Heart left ventricle (tissue), 16 donors: ENCODE measurements at regions of chr11 and their contacts with region 1.

Region 1: GRCh38 chr11:116691771-116692177 is 81.0 kb downstream of the BUD13 start:
- DNase-seq: peak in 2 of 5 donors; percentile 30 to 58
- ATAC-seq: peak in 3 of 4 donors; percentile 27 to 73 (median 46)
- H3K4me3 ChIP-seq: no peak overlapping the region
- H3K27ac ChIP-seq: no peak overlapping the region
- H3K4me1 ChIP-seq: no peaks in the 10 kb centered on the region
- H3K27me3 ChIP-seq: peaks cover 0 to 17% (median 4%) of the 10 kb centered on the region in 9 donors
- CTCF ChIP-seq: peak; percentile 59 to 80 (median 72)
- POLR2A ChIP-seq: no peak

Region 2: DNA sequence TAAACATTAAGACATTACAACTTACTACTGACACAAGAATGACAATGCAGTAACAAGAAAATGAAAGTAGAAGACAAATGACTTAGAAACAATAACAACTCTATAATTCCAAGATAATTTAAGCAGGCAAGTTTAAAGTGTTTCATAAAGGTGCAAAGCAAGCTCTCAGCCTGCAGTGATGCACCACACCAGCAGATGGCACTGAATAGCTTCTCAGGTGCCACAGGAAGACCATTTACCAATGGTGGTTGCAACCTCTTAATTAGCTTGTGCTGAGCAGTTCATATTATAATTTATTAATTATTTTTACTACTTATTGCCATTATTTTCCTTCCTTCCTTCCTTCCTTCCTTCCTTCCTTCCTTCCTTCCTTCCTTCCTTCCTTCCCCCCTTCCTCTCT is 1952.8 kb before region 1 on chr11:
- intact Hi-C with region 1: loop called in 1 of 10 experiments (anchors 10 kb)
- DNase-seq: peak in 1 of 5 donors; percentile 12
- ATAC-seq: no peak
- H3K4me3 ChIP-seq: no peak overlapping the region
- H3K27ac ChIP-seq: no peak overlapping the region
- H3K4me1 ChIP-seq: no peaks in the 10 kb centered on the region
- H3K27me3 ChIP-seq: peaks cover 0 to 9% (median 0%) of the 10 kb centered on the region in 9 donors
- CTCF ChIP-seq: peak; percentile 51 to 76 (median 60)
- POLR2A ChIP-seq: no peak

Region 3: DNA sequence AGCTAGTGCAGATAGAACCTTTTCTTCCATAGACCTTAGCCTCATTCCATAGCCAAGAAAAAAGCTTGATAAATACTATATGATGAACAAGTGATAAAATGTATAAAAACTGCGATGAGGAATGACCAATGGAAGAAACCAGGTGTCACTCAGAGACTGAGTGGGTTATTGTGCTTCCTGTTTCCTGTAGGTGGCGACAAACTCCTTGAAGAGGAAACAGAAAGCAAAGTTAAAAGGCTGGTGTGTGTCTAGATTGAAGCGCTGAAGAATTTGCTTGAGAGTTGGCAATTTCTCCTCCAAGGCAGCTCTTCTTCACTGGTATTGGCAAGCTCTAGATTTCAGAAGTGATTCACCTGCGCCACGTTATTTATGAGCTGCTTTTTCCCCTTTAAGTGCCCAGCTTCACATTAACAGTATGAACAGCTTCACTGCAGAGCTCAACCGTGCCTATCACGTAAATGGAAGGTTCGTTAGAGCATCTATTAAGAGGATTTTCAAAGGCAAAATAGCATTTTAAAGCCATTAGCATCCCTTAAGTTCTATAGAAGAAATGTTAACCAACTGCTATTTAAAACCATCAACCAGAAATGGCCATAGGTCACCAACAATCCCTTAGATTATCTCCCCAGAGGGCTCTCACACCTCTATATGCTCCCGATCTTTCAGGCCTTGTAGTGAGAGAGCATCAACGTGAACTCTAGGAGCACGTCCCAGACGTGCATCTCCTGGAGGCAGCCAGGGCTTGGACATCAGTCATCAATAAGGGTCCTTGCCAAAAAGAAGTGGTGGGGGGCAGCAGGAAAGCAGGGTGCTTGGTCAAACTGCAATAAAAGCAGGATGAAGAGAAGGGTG is 1367.0 kb before region 1 on chr11:
- intact Hi-C with region 1: loop called in 2 of 10 experiments (anchors 10 kb)
- DNase-seq: peak in 1 of 5 donors; percentile 20
- ATAC-seq: peak; percentile 61 to 90 (median 78)
- H3K4me3 ChIP-seq: peak overlapping the region in 3 of 12 donors; percentile 8 to 37 (median 14)
- H3K27ac ChIP-seq: no peak overlapping the region
- H3K4me1 ChIP-seq: peaks cover 0 to 8% (median 0%) of the 10 kb centered on the region in 12 donors
- H3K27me3 ChIP-seq: no peaks in the 10 kb centered on the region
- CTCF ChIP-seq: peak; percentile 67 to 85 (median 78)
- POLR2A ChIP-seq: no peak

Region 4: DNA sequence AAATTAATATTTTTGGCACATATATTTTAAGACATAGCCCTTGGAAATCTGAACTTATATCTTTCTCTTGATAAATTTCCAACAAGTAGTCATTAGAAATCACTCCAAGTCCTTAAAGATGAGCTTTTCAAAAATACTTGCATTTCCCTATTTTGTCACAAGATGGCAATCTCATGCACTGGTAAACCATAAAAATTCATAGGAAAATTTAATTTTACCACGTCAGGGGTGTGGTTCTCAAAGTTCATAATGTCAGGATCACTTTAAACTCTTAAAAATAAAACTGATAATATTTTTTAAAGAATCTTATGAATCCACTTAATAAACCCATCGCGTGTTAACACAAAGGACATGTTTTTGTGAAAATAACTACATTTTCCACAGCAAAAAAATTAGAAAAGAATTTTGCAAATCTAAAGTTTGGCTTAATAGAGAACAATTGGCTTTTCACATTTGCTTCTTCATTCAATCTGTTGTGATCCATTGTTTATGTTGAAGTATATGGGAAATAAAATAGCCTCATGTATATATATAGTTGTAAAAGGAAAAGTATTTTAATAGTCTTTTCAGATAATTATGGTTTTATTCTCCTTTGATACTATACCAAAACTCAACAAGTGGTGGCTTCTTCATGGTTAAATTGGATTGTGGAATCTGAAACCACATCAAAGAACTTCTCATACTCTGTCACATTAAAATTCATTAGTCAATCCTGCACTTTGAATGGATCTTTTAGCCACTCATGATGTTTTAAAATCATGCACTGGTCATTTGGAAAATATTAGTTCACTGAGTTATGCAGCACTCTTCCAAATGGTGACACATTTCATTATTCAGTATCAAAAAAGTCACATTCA is 1356.6 kb before region 1 on chr11:
- intact Hi-C with region 1: loop called in 1 of 10 experiments (anchors 10 kb)
- DNase-seq: no peak
- ATAC-seq: no peak
- H3K4me3 ChIP-seq: no peak overlapping the region
- H3K27ac ChIP-seq: no peak overlapping the region
- H3K4me1 ChIP-seq: peaks cover 0 to 8% (median 0%) of the 10 kb centered on the region in 12 donors
- H3K27me3 ChIP-seq: no peaks in the 10 kb centered on the region
- CTCF ChIP-seq: peak; percentile 50 to 85 (median 73)
- POLR2A ChIP-seq: no peak

Region 5: DNA sequence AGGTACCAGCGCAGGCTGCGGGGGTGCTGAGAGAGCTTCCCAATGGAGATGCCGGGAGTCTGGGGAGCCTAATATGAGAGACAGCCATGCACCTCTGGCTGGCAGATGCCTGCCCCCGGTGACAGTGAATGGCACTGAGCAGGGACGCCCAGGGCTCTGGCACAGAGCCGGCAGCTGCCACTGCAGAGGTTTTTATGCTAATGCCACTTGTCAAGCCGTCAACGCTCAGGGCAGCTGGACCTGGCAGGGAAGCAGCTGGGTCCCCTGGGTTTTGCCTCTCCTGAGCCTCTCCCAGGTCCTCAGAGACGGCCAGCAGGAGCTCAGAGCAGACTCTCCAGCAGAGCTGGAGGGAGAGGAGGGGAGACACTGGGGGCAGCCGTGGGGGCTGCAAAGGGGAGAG is 492.6 kb before region 1 on chr11:
- intact Hi-C with region 1: no loop called
- DNase-seq: peak in 3 of 5 donors; percentile 69 to 77 (median 74)
- ATAC-seq: peak; percentile 42 to 78 (median 72)
- H3K4me3 ChIP-seq: no peak overlapping the region
- H3K27ac ChIP-seq: no peak overlapping the region
- H3K4me1 ChIP-seq: peaks cover 0 to 7% (median 0%) of the 10 kb centered on the region in 12 donors
- H3K27me3 ChIP-seq: peaks cover 0 to 9% (median 0%) of the 10 kb centered on the region in 9 donors
- CTCF ChIP-seq: no peak
- POLR2A ChIP-seq: no peak

Region 6: DNA sequence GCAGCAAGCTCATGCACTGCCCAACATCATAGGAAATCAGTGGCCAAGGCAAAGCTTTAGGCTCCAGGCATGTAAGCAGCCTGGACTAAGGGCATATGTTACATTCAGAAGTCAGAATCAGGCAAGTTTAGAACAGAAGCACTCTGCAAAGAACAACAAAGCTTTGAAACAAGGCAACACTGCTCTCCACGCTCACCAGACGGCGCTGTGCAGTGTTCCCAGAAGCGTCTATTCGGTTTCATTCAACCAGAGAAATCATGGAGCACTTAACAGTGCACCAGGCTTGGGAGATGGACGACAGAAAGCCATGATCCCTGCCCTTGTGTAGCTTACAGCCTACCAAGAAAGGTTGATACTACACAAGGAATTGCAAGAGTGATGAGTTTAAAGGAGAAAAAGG is 474.8 kb before region 1 on chr11:
- intact Hi-C with region 1: loop called in 1 of 10 experiments (anchors 5 kb)
- DNase-seq: peak in 1 of 5 donors; percentile 42
- ATAC-seq: peak in 2 of 4 donors; percentile 16 to 64
- H3K4me3 ChIP-seq: no peak overlapping the region
- H3K27ac ChIP-seq: no peak overlapping the region
- H3K4me1 ChIP-seq: peaks cover 0 to 7% (median 0%) of the 10 kb centered on the region in 12 donors
- H3K27me3 ChIP-seq: no peaks in the 10 kb centered on the region
- CTCF ChIP-seq: peak in 11 of 12 donors; percentile 40 to 83 (median 61)
- POLR2A ChIP-seq: no peak

Region 7: DNA sequence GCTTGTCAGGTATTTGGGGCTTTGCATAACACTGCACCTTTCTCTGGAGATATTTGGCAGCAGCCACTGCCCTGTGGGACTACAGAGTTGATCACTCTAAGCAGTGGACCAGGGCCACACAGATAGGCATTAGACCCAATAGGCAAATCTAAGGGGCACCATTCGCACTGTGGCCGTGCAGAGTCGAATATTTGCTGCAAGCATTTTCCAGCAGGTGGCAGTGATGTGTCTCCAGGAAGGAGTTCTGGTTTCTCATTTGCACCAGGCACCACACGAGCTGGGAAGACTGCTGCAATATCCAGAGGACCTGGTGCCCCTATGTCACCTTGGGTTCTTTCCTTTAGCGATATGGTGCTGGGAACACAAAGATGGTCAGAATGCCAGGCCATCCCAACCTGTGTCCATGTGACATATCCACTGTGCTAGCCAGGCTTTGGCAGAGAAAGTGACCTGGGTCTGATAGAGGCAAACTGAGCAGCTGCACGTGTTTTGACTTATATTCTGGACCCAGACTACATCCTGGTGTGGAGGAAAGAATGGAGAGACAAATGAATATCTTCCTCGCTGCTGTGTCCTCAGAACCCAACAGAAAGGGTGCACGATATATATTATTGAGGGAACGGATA is 237.6 kb before region 1 on chr11:
- intact Hi-C with region 1: loop called in 4 of 10 experiments (anchors 2 to 5 kb)
- DNase-seq: peak in 3 of 5 donors; percentile 28 to 44 (median 39)
- ATAC-seq: peak in 3 of 4 donors; percentile 58 to 64 (median 59)
- H3K4me3 ChIP-seq: no peak overlapping the region
- H3K27ac ChIP-seq: no peak overlapping the region
- H3K4me1 ChIP-seq: no peaks in the 10 kb centered on the region
- H3K27me3 ChIP-seq: peaks cover 0 to under 1% (median 0%) of the 10 kb centered on the region in 9 donors
- CTCF ChIP-seq: peak; percentile 29 to 64 (median 48)
- POLR2A ChIP-seq: no peak

Region 8: DNA sequence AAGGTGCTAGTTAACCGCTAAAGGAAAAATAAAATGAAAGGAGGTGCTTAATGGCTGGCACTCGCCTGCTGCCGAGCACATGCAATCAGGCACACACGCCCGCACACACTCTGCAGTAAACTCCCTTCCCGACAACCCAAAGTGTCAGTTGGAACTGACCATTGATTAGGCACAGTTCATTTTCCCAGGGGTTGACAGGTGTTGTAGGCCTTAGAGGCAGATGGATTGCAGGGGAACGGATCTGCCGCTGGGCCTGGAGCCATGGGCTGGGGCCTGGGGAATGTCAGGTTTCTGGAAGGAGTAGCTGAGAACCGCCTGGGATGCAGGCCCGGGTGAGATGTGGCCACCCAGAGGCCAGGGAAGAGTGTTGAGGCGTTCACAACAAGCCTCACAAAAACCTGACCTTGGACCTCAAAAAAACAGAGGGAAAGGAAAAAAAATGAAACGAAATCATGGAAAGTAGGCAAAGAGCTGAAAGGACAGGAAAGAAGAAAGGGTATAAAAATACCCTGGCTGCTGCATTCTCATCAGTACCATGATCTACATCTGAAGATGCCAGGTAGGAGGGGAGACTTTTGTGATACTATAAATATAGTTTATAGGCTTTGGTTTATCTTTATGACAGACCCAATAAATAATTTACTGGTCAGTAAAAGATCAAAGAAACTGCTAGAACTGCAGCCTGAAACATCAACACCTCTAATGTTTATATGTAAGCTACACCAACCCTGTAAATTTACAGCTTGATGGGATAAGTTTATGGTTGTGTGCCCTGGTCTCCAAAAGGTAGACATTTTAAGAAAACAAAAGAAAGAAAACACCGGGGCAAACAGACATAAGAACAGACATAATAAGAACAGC is 232.4 kb before region 1 on chr11:
- intact Hi-C with region 1: loop called in 4 of 10 experiments (anchors 2 to 5 kb)
- DNase-seq: no peak
- ATAC-seq: peak in 2 of 4 donors; percentile 24 to 53
- H3K4me3 ChIP-seq: no peak overlapping the region
- H3K27ac ChIP-seq: peak overlapping the region in 1 of 12 donors; percentile 51
- H3K4me1 ChIP-seq: no peaks in the 10 kb centered on the region
- H3K27me3 ChIP-seq: peaks cover 0 to 8% (median 0%) of the 10 kb centered on the region in 9 donors
- CTCF ChIP-seq: no peak
- POLR2A ChIP-seq: no peak